Prostate gland (tissue), 2 donors: ENCODE measurements at regions of chr3 and their contacts with region 1.

Region 1: GRCh38 chr3:136042608-136043221 is 77.2 kb downstream of the PPP2R3A start:
- DNase-seq: no peak
- H3K4me3 ChIP-seq: no peak overlapping the region
- H3K27ac ChIP-seq: no peak overlapping the region
- H3K4me1 ChIP-seq: no peaks in the 10 kb centered on the region
- H3K27me3 ChIP-seq: no peaks in the 10 kb centered on the region
- CTCF ChIP-seq: peak in 3 of 4 experiments; percentile 40 to 54 (median 49)
- POLR2A ChIP-seq: no peak

Region 2: GRCh38 chr3:135918580-135918962 is 124.1 kb before region 1 on chr3:
- intact Hi-C with region 1: loop called (anchors 2 kb)
- DNase-seq: no peak
- H3K4me3 ChIP-seq: no peak overlapping the region
- H3K27ac ChIP-seq: no peak overlapping the region
- H3K4me1 ChIP-seq: no peaks in the 10 kb centered on the region
- H3K27me3 ChIP-seq: no peaks in the 10 kb centered on the region
- CTCF ChIP-seq: peak in 3 of 4 experiments; percentile 26 to 55 (median 34)
- POLR2A ChIP-seq: no peak

Region 3: DNA sequence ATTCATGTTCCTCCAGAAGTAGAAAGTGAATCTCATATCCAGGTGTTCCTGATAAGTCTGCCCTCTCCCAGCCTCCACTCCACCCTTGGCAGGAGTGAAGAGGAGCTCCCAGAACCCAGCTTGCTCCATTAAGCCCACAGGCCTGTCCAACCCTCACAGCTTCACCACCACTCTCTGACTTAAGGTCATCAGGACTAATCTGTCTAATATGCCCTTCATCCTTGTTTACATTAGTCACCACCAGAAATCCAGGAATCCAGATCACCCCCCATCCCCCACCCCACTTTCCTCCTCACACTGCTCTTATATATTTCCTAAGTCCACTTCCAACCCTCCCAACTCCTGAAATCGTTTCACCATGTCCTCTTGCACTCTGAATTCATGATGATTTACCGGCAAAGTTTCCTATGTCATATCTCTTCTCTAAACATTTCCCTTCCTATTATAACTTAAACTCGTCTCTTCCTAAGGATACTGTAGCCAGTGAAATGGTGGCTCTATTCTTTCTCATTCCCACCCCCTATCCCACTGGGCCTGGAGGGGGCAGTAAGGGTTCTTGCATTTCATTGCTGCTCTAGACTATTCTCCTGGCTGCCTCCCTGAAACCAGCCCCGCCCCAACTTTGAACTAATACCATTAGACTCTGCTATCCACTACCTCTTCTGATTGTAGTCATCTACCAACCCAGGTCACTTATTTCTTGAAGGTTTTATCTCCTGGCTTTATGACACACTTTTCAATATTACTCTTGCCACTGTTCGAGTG is 33.8 kb before region 1 on chr3:
- intact Hi-C with region 1: no loop called
- DNase-seq: no peak
- H3K4me3 ChIP-seq: no peak overlapping the region
- H3K27ac ChIP-seq: no peak overlapping the region
- H3K4me1 ChIP-seq: no peaks in the 10 kb centered on the region
- H3K27me3 ChIP-seq: no peaks in the 10 kb centered on the region
- CTCF ChIP-seq: no peak
- POLR2A ChIP-seq: no peak